ENCODE measurements at regions of chr10 and their contacts with region 1.

Region 1: GRCh38 chr10:96292971-96293920 is 11.0 kb upstream of the DNTT start:
- DNase-seq: no peak
- H3K4me3 ChIP-seq: no peak overlapping the region
- H3K27ac ChIP-seq: no peak overlapping the region
- H3K4me1 ChIP-seq: peaks cover 0 to 8% (median 4%) of the 10 kb centered on the region in 4 donors
- H3K27me3 ChIP-seq: peaks cover 0 to 9% of the 10 kb centered on the region in 2 donors
- CTCF ChIP-seq: peak; percentile 56 to 79

Region 2: DNA sequence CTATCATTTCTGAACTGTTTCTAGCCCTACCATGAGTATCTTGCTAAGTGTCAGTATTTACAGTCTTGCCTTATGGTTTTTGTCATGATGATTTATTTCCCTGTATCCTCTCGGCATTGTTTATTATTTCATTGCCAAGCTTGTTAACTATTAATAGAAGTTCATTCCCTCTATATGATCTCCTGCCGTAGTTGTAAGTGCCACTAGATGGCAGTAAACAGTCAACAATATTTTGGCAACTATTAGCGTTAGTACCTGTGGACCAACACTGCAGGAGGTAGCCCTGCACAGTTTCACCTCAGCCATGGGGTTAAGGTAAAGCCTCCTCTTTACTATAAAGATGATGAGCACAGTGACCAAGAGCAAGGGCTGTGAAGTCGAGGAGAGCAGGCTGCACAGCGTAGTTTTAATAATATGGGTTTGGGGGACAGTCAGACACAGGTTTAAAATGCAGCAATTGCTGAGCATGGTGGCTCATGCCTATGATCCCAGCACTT is 276.0 kb before region 1 on chr10:
- intact Hi-C with region 1: loop called (anchors 5 kb)
- DNase-seq: no peak
- H3K4me3 ChIP-seq: no peak overlapping the region
- H3K27ac ChIP-seq: no peak overlapping the region
- H3K4me1 ChIP-seq: peaks cover 0 to 3% (median 0%) of the 10 kb centered on the region in 4 donors
- H3K27me3 ChIP-seq: no peaks in the 10 kb centered on the region
- CTCF ChIP-seq: peak; percentile 62 to 68

Region 3: DNA sequence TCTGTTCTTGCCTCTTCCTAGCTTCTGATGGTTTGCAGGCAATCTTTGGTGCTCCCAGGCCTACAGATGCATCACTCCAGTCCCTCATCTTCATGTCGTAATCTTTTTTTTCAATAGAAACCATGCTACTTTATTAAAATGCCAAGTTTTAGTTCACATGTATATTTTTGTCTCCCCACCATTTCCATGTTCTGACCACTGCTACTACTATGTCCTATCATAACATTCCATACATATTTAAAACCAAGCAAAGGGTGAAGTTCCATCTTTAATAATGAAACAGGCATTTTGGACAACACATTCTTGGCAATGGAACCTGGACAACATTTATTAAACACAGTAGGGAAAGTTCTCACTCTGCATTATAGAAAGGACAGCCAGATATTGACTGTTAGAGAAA is 104.3 kb before region 1 on chr10:
- intact Hi-C with region 1: no loop called
- DNase-seq: no peak
- H3K4me3 ChIP-seq: no peak overlapping the region
- H3K27ac ChIP-seq: no peak overlapping the region
- H3K4me1 ChIP-seq: peaks cover 0 to 21% (median 7%) of the 10 kb centered on the region in 4 donors
- H3K27me3 ChIP-seq: no peaks in the 10 kb centered on the region
- CTCF ChIP-seq: no peak

Region 4: DNA sequence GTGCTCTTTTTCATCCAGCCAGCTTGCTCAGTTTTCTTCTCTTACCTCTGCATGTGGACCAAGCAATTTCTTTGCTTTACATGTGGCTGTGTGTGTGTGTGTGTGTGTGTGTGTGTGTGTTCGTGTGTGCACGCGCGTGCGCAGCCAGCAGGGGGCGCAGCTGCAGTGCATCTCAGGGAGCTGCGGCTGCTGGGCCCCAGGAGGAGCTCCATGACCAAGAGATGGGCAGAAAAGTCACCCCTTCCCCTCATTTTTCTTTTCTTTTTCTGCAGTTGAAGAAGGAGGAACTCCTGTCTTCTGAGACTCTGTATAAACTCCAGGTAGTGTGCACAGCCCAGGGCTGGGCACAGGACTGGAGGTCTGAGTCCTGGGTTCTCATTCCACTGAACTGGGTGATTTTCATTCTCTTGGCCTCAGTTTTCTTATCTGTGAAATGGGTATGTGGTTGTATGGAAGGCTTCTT is 63.6 kb before region 1 on chr10:
- intact Hi-C with region 1: loop called (anchors 2 kb)
- DNase-seq: peak in 1 of 2 donors; percentile 77
- H3K4me3 ChIP-seq: no peak overlapping the region
- H3K27ac ChIP-seq: no peak overlapping the region
- H3K4me1 ChIP-seq: no peaks in the 10 kb centered on the region
- H3K27me3 ChIP-seq: no peaks in the 10 kb centered on the region
- CTCF ChIP-seq: peak; percentile 77 to 95

Region 5: GRCh38 chr10:96656839-96657238 is 363.6 kb after region 1 on chr10:
- intact Hi-C with region 1: no loop called
- DNase-seq: no peak
- H3K4me3 ChIP-seq: no peak overlapping the region
- H3K27ac ChIP-seq: no peak overlapping the region
- H3K4me1 ChIP-seq: no peaks in the 10 kb centered on the region
- H3K27me3 ChIP-seq: no peaks in the 10 kb centered on the region
- CTCF ChIP-seq: no peak